ENCODE measurements at regions of chr3 and their contacts with region 1.

Region 1: DNA sequence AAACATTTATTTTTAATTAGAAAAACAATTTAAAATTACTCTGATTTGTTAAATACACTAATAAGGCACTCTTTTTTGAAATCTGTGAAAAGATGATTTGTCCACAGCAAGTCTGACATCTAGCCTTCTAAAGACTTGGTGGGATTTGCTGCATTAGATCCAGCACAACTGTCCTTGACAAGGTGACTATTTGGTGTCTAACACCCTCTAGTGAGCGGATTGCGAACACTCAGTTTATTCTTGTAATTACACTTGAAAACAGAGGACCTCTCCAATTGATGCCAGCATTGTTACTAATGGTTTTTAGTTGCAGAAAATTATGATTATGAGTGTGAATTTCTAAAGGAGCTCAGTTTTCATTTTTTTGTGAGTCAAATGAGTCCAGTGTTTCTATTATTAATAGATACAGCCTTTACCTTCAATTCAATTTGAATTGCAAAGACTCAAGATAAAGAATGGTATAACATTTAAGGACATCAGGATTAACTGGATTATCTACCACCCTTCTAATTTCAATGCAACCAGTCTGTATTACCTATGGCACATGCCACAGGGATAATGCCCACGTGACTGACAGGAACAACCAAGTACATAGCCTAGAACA is 29.7 kb upstream of the STRIT1 start:
- DNase-seq: peak; percentile 10
- H3K4me3 ChIP-seq: no peak overlapping the region
- H3K27ac ChIP-seq: no peak overlapping the region
- H3K4me1 ChIP-seq: no peaks in the 10 kb centered on the region
- H3K27me3 ChIP-seq: no peaks in the 10 kb centered on the region
- CTCF ChIP-seq: peak; percentile 42 to 64 (median 57)
- EP300 ChIP-seq: no peak
- POLR2A ChIP-seq: no peak

Region 2: DNA sequence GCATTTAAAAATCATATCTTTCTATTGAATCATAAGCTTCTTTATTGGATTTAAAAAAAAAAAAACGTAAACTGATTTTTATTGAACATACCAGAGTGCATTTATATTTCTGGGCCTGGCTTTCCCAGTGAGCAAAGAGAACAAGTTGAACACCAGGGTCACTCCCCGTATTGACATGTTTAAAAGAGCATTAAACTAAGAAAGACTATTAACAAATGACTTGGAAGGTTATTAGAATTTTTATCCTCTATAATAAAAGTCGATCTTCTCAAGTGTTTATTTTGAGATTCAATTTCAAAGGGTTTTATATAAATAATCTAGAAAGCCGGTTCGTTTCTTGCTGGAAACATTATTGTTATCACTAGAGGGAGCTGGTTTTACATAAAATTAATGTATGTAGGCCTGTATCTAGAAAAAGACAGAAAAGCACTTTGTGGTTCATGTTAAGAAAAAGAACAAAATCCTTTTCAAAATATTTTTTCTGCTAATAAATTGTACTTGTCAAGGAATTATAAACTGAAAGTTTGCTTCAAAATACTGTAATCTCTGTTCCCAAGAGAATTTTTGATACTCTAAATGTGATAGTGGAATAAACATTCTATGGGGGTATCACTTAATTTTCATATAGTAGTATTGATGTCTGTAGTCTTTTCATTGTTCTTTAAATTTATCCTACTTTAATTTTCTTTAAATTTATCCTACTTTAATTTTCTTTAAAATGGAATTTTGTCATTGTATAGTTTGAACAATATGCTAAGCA is 564.9 kb before region 1 on chr3:
- in situ Hi-C with region 1: loop called (anchors 10 to 25 kb)
- intact Hi-C with region 1: no loop called
- DNase-seq: no peak
- H3K4me3 ChIP-seq: no peak overlapping the region
- H3K27ac ChIP-seq: no peak overlapping the region
- H3K4me1 ChIP-seq: no peaks in the 10 kb centered on the region
- H3K27me3 ChIP-seq: no peaks in the 10 kb centered on the region
- CTCF ChIP-seq: peak in 4 of 5 experiments; percentile 21 to 50 (median 38)
- EP300 ChIP-seq: no peak
- POLR2A ChIP-seq: no peak

Region 3: DNA sequence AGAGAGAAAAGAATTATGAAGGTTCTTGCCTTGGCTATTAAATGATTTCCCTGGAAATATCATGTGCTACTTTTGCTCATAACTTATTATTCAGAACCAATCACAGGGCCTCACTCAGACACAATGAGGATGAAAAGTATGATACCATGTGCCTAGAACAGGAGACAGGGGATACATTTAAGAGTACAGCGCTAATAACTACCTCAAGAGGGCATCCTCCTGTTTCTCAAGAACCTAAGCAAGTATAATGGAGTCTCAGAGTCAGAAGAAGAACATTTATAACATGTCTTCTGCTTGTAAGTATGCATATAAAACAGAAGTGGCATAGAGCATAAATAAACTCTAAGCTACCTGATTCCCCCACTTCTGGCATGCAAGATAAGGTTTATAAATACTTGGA is 368.4 kb before region 1 on chr3:
- in situ Hi-C with region 1: loop called in 1 of 4 experiments (anchors 25 kb)
- intact Hi-C with region 1: no loop called
- DNase-seq: no peak
- H3K4me3 ChIP-seq: no peak overlapping the region
- H3K27ac ChIP-seq: no peak overlapping the region
- H3K4me1 ChIP-seq: no peaks in the 10 kb centered on the region
- H3K27me3 ChIP-seq: no peaks in the 10 kb centered on the region
- CTCF ChIP-seq: peak in 2 of 5 experiments; percentile 22 to 31
- EP300 ChIP-seq: no peak
- POLR2A ChIP-seq: no peak

Region 4: GRCh38 chr3:155631323-155632019 is 308.3 kb after region 1 on chr3:
- in situ Hi-C with region 1: no loop called
- intact Hi-C with region 1: no loop called
- DNase-seq: no peak
- H3K4me3 ChIP-seq: no peak overlapping the region
- H3K27ac ChIP-seq: no peak overlapping the region
- H3K4me1 ChIP-seq: no peaks in the 10 kb centered on the region
- H3K27me3 ChIP-seq: no peaks in the 10 kb centered on the region
- CTCF ChIP-seq: no peak
- EP300 ChIP-seq: no peak
- POLR2A ChIP-seq: no peak